Kidney (tissue), 22 donors: ENCODE measurements at regions of chr10 and their contacts with region 1.

Region 1: DNA sequence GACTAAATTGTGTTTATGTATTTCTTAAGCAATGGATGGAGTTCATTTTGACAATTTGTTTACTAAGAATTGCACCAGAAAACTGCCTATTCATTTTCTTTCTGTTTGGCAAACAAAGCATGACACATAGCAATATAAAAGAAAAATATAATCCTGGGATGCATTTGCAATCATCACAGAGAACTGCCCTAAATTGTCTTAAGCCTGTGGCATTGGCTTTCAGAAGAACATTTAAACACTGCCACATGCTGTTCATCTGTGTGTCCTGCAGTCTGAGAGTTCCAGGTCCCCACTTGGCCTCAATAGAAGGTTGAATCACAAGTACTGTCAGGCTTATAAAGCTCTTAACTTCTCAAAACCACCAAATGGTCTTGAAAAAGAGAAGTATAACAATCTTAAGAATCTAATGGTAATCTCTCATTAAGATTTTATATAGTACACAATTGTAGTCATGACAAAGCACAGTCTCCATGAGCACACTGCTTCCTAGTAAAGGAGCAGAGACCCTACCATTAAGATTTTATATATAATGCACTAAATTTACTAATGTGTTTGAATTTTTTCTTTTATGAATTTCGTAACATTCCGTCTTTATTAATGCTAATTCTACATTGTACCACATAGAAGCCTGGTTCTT is 29.9 kb downstream of the RNLS start:
- DNase-seq: peak in 3 of 5 donors; percentile 44 to 85 (median 73)
- H3K4me3 ChIP-seq: no peak overlapping the region
- H3K27ac ChIP-seq: no peak overlapping the region
- H3K4me1 ChIP-seq: no peaks in the 10 kb centered on the region
- H3K27me3 ChIP-seq: no peaks in the 10 kb centered on the region
- CTCF ChIP-seq: peak; percentile 88

Region 2: GRCh38 chr10:87850742-87851205 is 702.5 kb before region 1 on chr10:
- intact Hi-C with region 1: loop called (anchors 10 kb)
- DNase-seq: peak in 4 of 5 donors; percentile 57 to 88 (median 74)
- H3K4me3 ChIP-seq: no peak overlapping the region
- H3K27ac ChIP-seq: no peak overlapping the region
- H3K4me1 ChIP-seq: peaks cover 0 to 3% (median 0%) of the 10 kb centered on the region in 3 donors
- H3K27me3 ChIP-seq: no peaks in the 10 kb centered on the region
- CTCF ChIP-seq: peak; percentile 85

Region 3: GRCh38 chr10:88401671-88402347 is 151.4 kb before region 1 on chr10:
- intact Hi-C with region 1: no loop called
- DNase-seq: no peak
- H3K4me3 ChIP-seq: no peak overlapping the region
- H3K27ac ChIP-seq: no peak overlapping the region
- H3K4me1 ChIP-seq: no peaks in the 10 kb centered on the region
- H3K27me3 ChIP-seq: no peaks in the 10 kb centered on the region
- CTCF ChIP-seq: peak; percentile 31

Region 4: GRCh38 chr10:88442716-88443115 is 110.5 kb before region 1 on chr10:
- intact Hi-C with region 1: no loop called
- DNase-seq: no peak
- H3K4me3 ChIP-seq: no peak overlapping the region
- H3K27ac ChIP-seq: no peak overlapping the region
- H3K4me1 ChIP-seq: no peaks in the 10 kb centered on the region
- H3K27me3 ChIP-seq: no peaks in the 10 kb centered on the region
- CTCF ChIP-seq: no peak